ENCODE measurements at regions of chr11 and their contacts with region 1.

Region 1: DNA sequence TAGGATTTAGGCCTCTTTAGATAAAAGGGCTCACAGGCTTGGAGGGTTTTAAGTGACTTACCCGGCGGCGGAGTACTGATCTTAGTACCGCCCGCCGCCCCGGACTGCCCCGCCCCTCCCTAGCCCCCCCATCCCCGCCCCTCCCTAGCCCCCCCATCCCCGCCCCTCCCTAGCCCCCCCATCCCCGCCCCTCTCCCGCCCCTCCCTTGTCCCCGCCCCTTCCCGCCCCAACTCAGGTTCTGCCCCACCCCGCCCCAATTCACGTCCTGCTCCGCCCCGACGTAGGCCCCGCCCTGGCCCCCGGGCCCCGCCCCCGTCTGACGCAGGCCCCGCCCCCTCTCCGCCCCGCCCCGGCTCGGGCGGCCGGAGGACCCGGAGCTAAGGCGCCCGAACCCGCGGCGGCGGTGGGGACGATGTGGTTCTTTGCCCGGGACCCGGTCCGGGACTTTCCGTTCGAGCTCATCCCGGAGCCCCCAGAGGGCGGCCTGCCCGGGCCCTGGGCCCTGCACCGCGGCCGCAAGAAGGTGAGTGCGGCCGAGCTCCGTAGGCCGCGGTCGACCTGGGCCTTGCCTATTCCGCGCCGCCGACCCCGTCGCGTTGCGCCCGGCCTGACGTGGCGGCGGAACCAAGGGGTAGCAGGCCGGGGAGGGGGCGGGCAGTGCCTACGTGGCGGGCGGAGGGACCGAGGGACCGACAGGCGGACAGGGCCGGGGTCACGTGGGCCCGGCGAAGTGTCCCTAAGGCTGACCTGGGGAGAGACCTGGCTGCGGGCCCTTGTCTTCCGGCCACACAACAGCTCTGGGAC is at the start of gene SCYL1:
- DNase-seq: peak; percentile 53 to 81
- ATAC-seq: peak; percentile 77 to 80
- H3K4me3 ChIP-seq: peak within 1 kb of the TSS; percentile 94
- H3K27ac ChIP-seq: peak within 1 kb of the TSS; percentile 90 to 99
- H3K4me1 ChIP-seq: peaks cover 18% of the 10 kb centered on the region
- CTCF ChIP-seq: no peak
- EP300 ChIP-seq: no peak
- POLR2A ChIP-seq: peak; percentile 44; the same call in 1 of the 2 replicates
- RAD21 ChIP-seq: no peak
- polyA plus RNA-seq, gene SCYL1: 30.8 and 33.6 TPM in 2 replicates

Region 2: GRCh38 chr11:65512306-65512705 is 12.6 kb before region 1 on chr11:
- CTCF ChIA-PET with region 1: interaction called, 36 read pairs
- POLR2A ChIA-PET with region 1: interaction called, 4 read pairs
- DNase-seq: no peak
- ATAC-seq: no peak
- H3K4me3 ChIP-seq: no peak overlapping the region
- H3K27ac ChIP-seq: no peak overlapping the region
- H3K4me1 ChIP-seq: peaks cover 15% of the 10 kb centered on the region
- CTCF ChIP-seq: no peak
- EP300 ChIP-seq: no peak
- POLR2A ChIP-seq: no peak
- RAD21 ChIP-seq: no peak

Region 3: DNA sequence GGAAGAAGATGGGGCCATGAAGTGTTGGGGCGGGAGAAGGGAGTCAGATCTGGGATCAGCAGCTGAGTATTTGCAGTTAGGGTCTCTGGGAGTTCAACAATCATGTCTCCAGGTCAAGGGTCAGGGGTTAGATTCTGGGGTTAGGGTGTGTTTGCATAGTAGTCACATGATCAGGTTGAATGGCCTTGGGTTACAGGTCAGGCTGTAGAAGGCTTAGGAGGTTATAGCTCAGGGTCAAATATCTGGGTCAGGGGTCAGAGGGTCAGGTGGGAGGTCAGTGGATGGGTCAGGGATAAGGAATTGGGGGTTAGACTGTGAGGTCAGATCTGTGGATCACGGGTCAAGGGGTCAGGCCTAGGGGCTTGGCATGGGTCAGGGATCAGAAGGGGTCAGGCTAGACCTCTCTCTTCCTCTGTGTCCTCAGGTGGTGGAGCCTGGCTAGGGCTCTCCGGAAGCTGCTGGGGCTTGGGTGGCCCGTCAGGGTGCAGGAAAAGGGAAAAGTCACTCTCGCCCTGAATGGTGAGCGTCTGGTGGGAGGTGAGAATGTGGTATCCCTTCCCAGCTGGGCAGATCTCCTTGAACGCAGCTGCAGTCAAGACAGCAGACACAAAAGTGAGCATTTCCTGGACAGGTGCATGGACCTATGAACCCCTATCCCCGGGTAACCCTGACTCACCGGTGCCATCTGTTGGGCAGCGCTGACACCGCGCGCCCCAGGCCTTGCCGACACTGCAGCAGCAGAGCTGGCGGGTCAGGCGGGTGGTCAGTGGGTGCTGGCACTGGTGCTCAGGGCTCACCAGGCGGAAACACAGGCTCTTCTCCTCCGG is 26.8 kb after region 1 on chr11:
- CTCF ChIA-PET with region 1: interaction called, 14 read pairs
- POLR2A ChIA-PET with region 1: no interaction called
- DNase-seq: peak; percentile 58 to 81
- ATAC-seq: peak; percentile 57 to 72; a peak in 5 of 6 replicates
- H3K4me3 ChIP-seq: no peak overlapping the region
- H3K27ac ChIP-seq: no peak overlapping the region; a peak in 1 of 6 replicates
- H3K4me1 ChIP-seq: peaks cover 50% of the 10 kb centered on the region
- CTCF ChIP-seq: peak; percentile 54
- EP300 ChIP-seq: no peak
- POLR2A ChIP-seq: no peak
- RAD21 ChIP-seq: peak; percentile 42 to 52; a peak in 4 of 5 replicates

Measured in A549 (cell line).